ENCODE measurements at regions of chr18 and their contacts with region 1.

Region 1: DNA sequence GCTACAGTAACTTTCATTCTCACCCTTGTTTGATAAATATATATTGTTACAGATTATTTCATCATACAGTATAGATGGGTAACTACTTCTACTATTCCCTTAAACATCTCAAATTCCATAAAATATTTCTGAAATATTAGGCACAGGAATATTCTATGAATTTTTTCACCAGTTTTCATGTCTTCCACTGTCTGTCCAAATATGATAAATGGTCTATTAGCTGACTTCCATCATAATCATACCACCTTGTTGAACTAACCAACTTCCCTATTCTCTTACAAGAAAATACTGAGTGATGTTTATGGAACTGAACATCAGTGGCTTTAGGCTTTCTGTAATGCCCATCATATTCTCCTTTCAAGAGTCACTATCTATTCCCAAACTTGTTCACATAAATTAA is 82.4 kb downstream of the TRAPPC8 start:
- DNase-seq: no peak
- ATAC-seq: no peak
- H3K4me3 ChIP-seq: no peak overlapping the region
- H3K27ac ChIP-seq: no peak overlapping the region
- H3K4me1 ChIP-seq: no peaks in the 10 kb centered on the region
- H3K27me3 ChIP-seq: no peaks in the 10 kb centered on the region
- CTCF ChIP-seq: no peak
- EP300 ChIP-seq: no peak
- POLR2A ChIP-seq: no peak
- RAD21 ChIP-seq: no peak

Region 2: DNA sequence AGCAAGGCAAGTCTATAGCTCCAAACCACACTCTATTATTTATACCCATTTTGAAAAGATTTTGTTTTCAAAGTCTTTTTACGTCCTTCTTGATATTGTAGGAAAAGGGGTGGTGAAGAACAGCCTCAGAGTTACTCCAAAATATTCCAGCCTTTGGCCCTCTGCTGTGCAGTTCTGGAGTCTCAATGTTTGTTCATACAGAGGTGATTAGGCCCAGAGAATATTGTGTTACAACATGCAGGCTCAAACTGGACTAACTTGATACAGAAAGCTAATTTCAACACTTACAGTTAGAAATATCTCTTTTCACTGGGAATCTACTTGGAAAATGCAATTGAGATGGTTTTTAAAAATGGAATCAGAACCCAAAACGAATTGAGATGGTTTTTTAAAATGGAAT is 59.4 kb before region 1 on chr18:
- CTCF ChIA-PET with region 1: no interaction called
- POLR2A ChIA-PET with region 1: no interaction called
- RAD21 ChIA-PET with region 1: no interaction called
- SMC1A ChIA-PET with region 1: no interaction called
- in situ Hi-C with region 1: no loop called
- intact Hi-C with region 1: no loop called
- DNase-seq: no peak
- ATAC-seq: no peak
- H3K4me3 ChIP-seq: no peak overlapping the region
- H3K27ac ChIP-seq: no peak overlapping the region
- H3K4me1 ChIP-seq: no peaks in the 10 kb centered on the region
- H3K27me3 ChIP-seq: no peaks in the 10 kb centered on the region
- CTCF ChIP-seq: no peak
- EP300 ChIP-seq: no peak
- POLR2A ChIP-seq: no peak
- RAD21 ChIP-seq: no peak

Region 3: DNA sequence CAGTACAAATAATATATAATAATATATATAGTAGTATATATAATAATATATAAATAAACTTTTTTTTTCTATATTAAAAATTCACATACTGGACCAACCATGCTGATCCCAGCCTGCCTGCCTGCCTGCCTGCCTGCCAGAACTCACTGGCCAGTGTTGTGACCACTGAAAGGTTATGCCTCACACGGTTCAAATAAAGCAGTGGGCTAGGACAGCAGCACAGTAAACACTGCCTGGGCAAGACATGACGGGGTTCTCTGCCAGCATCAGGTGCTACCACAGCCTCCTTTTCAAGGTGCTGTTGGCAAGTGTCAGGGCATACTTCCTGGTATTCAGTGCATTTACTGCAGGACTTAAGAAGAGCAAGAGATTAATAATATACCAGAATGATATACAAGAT is 14.8 kb after region 1 on chr18:
- CTCF ChIA-PET with region 1: interaction called, 3 read pairs
- POLR2A ChIA-PET with region 1: no interaction called
- RAD21 ChIA-PET with region 1: no interaction called
- SMC1A ChIA-PET with region 1: interaction called, 13 read pairs
- in situ Hi-C with region 1: no loop called
- intact Hi-C with region 1: no loop called
- DNase-seq: no peak
- ATAC-seq: no peak
- H3K4me3 ChIP-seq: no peak overlapping the region
- H3K27ac ChIP-seq: no peak overlapping the region
- H3K4me1 ChIP-seq: no peaks in the 10 kb centered on the region
- H3K27me3 ChIP-seq: no peaks in the 10 kb centered on the region
- CTCF ChIP-seq: no peak
- EP300 ChIP-seq: no peak
- POLR2A ChIP-seq: no peak
- RAD21 ChIP-seq: no peak

Region 4: DNA sequence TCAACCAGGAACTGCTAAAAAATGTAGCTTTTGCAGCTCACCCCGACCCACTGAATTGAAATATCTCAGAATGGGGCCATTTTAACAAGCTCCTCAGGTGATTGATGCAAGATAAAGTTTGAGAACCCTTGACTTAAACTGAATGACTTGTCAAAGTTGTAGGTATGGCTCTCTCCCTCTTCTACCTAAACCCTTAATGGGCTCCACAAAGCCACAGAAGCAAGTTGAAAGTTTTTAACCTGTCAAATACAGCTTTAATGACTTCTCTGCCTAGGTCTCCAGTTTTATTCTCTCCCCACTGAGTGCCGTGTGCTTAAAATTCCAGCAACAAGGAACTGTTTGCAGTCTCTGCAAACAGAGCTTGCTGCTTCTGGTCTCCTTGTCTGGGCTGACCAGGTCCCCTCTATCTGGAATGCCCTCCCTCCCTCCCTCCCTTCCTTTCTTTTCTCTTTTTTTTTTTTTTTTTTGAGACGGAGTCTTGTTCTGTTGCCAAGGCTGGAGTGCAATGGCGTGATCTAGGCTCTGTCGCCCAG is 138.5 kb after region 1 on chr18:
- CTCF ChIA-PET with region 1: no interaction called
- POLR2A ChIA-PET with region 1: no interaction called
- RAD21 ChIA-PET with region 1: no interaction called
- SMC1A ChIA-PET with region 1: no interaction called
- in situ Hi-C with region 1: no loop called
- intact Hi-C with region 1: no loop called
- DNase-seq: no peak
- ATAC-seq: no peak
- H3K4me3 ChIP-seq: no peak overlapping the region
- H3K27ac ChIP-seq: no peak overlapping the region
- H3K4me1 ChIP-seq: no peaks in the 10 kb centered on the region
- H3K27me3 ChIP-seq: no peaks in the 10 kb centered on the region
- CTCF ChIP-seq: no peak
- EP300 ChIP-seq: no peak
- POLR2A ChIP-seq: no peak
- RAD21 ChIP-seq: no peak

Measured in GM12878 (cell line).